CD4-positive, alpha-beta memory T cell (primary cell): ENCODE measurements at regions of chr14 and their contacts with region 1.

Region 1: DNA sequence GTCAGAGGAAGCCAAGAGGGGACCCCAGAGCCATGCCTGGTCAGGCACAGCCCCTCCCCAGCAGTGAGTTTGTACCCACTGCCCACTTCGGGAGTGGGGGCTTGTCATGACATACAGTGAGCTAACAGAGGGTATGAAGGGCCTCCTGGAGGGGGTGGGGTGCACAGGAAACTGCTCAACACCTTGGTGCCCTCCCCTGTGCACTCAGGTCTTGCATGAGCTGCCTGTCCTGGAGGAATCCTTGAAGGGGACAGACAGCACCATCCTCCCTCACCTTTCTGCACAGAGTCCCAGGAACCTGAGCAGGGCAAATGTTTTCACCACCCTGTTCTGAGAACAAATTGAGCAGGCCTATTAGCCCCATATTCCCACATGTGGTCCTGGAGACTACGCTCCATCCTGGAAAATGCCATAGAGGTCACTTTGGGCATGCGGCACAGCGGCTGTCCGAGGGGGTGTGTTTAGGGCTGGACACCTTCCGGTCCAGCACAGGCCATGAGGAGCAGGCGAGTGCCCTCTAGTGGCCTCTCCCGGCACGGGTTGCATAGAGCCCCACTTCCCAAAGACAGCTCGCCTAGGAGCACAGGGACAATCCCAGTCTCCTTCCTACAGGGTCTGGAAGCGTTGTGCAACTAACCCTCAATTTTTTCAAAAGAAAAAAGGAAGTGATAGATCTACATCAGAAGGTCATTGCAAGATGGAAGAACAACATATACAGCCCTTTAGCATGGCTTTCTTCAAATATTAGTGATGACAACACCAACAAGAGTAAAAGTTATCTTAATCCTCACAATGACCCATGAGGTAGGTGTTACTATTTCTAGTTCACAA is 31.9 kb upstream of the ZFP36L1 start:
- DNase-seq: no peak
- H3K4me3 ChIP-seq: no peak overlapping the region
- H3K4me3 Mint-ChIP-seq: no peak overlapping the region
- H3K27ac ChIP-seq: no peak overlapping the region
- H3K27ac Mint-ChIP-seq: peak overlapping the region in 1 of 7 donors; percentile 57
- H3K4me1 ChIP-seq: peaks cover 39% of the 10 kb centered on the region
- H3K4me1 Mint-ChIP-seq: peaks cover 16 to 46% (median 30%) of the 10 kb centered on the region in 4 donors
- H3K27me3 ChIP-seq: no peaks in the 10 kb centered on the region
- H3K27me3 Mint-ChIP-seq: no peaks in the 10 kb centered on the region

Region 2: GRCh38 chr14:67816326-67817002 is 1008.3 kb before region 1 on chr14 and contains the start of gene ZFYVE26:
- CTCF ChIA-PET with region 1: no interaction called
- POLR2A ChIA-PET with region 1: no interaction called
- intact Hi-C with region 1: loop called (anchors 5 kb)
- DNase-seq: peak; percentile 87 to 95 (median 88)
- H3K4me3 ChIP-seq: peak within 1 kb of the TSS; percentile 54 to 86
- H3K4me3 Mint-ChIP-seq: peak within 1 kb of the TSS; percentile 89 to 99 (median 96)
- H3K27ac ChIP-seq: peak within 1 kb of the TSS; percentile 47
- H3K27ac Mint-ChIP-seq: peak within 1 kb of the TSS; percentile 86 to 98 (median 96)
- H3K4me1 ChIP-seq: peaks cover 38% of the 10 kb centered on the region
- H3K4me1 Mint-ChIP-seq: peaks cover 39 to 61% (median 46%) of the 10 kb centered on the region in 4 donors
- H3K27me3 ChIP-seq: no peaks in the 10 kb centered on the region
- H3K27me3 Mint-ChIP-seq: no peaks in the 10 kb centered on the region
- total RNA-seq, gene ZFYVE26: 35.2 to 38.1 TPM

Region 3: GRCh38 chr14:67934008-67934481 is 890.7 kb before region 1 on chr14:
- CTCF ChIA-PET with region 1: interaction called, 67 read pairs
- POLR2A ChIA-PET with region 1: interaction called, 5 read pairs
- intact Hi-C with region 1: no loop called
- DNase-seq: peak in 4 of 5 donors; percentile 37 to 51 (median 46)
- H3K4me3 ChIP-seq: no peak overlapping the region
- H3K4me3 Mint-ChIP-seq: no peak overlapping the region
- H3K27ac ChIP-seq: no peak overlapping the region
- H3K27ac Mint-ChIP-seq: peak overlapping the region in 5 of 7 donors; percentile 9 to 94 (median 77)
- H3K4me1 ChIP-seq: peaks cover 7% of the 10 kb centered on the region
- H3K4me1 Mint-ChIP-seq: peaks cover 5 to 6% (median 5%) of the 10 kb centered on the region in 4 donors
- H3K27me3 ChIP-seq: no peaks in the 10 kb centered on the region
- H3K27me3 Mint-ChIP-seq: no peaks in the 10 kb centered on the region

Region 4: DNA sequence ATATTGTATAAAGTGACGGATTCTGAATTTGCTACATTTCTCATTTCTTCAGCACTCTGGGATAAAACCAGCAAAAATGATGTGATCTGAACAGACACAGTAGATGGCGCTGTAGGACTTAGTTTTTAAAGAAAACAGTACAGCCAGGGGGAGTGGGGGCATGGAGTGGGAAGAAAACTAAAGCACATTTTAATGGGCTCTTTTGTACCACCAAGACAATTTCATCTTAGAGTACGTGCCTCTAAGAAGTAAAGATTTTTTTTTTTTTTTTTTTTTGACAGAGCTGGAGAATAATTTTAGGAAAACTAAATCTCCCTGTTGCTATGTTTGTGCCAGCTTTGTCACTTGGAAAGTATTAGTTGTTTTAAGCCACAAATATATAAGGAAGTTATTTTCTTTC is 880.8 kb before region 1 on chr14:
- CTCF ChIA-PET with region 1: interaction called, 16 read pairs
- POLR2A ChIA-PET with region 1: no interaction called
- intact Hi-C with region 1: no loop called
- DNase-seq: peak; percentile 47 to 65 (median 53)
- H3K4me3 ChIP-seq: no peak overlapping the region
- H3K4me3 Mint-ChIP-seq: no peak overlapping the region
- H3K27ac ChIP-seq: no peak overlapping the region
- H3K27ac Mint-ChIP-seq: no peak overlapping the region
- H3K4me1 ChIP-seq: no peaks in the 10 kb centered on the region
- H3K4me1 Mint-ChIP-seq: no peaks in the 10 kb centered on the region
- H3K27me3 ChIP-seq: no peaks in the 10 kb centered on the region
- H3K27me3 Mint-ChIP-seq: no peaks in the 10 kb centered on the region

Region 5: GRCh38 chr14:68476212-68476907 is 348.4 kb before region 1 on chr14:
- CTCF ChIA-PET with region 1: no interaction called
- POLR2A ChIA-PET with region 1: no interaction called
- intact Hi-C with region 1: no loop called
- DNase-seq: no peak
- H3K4me3 ChIP-seq: no peak overlapping the region
- H3K4me3 Mint-ChIP-seq: no peak overlapping the region
- H3K27ac ChIP-seq: no peak overlapping the region
- H3K27ac Mint-ChIP-seq: no peak overlapping the region
- H3K4me1 ChIP-seq: no peaks in the 10 kb centered on the region
- H3K4me1 Mint-ChIP-seq: peaks cover 7 to 14% (median 9%) of the 10 kb centered on the region in 4 donors
- H3K27me3 ChIP-seq: no peaks in the 10 kb centered on the region
- H3K27me3 Mint-ChIP-seq: no peaks in the 10 kb centered on the region

Region 6: DNA sequence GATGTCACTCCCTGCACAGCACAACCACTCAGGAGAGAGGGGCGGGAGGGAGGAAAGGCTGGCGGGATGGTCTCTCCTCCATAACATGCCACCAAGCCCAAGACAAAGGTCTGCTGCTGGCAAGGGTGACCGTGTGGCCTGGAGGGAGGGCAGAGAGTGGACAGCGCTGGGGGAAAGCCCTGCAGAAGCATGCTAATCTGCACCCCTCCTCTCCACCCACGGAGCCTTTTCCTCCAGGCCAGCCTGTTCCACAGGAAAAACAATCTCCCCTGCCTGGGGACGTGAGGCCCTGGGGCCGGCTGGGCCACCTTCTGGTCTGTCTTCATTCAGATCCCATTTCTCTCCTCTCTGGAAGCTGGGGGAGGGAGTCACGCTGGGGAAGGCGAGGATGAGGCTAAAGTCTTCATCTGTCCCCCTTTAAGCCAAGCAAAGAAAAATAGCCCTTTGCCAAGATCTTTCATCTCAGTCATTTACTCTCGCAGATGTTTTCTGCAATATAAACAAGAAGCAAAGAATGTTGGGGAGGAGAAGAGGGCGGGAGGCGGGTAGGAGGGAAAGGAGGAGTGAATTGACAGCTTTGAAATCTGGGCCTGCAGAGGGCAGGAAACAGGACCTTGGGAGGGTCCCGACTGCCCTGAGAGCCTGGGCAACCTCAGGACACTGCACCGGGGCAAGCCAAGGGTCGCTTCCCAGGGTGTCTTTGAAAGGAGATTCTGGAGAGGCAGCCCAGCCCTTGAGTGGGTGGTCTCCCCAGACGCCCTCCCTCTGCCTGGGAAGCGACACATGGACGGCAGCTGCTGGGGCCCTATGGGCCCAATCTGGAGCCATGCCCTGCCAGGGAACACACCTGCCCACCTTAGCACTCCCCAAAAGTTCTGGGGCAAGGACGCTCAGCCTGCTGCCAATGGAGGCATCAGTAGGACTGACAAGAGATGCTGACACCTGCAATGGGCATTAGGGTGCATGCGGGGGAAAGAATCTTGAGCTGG is 165.5 kb before region 1 on chr14:
- CTCF ChIA-PET with region 1: no interaction called
- POLR2A ChIA-PET with region 1: no interaction called
- intact Hi-C with region 1: no loop called
- DNase-seq: no peak
- H3K4me3 ChIP-seq: no peak overlapping the region
- H3K4me3 Mint-ChIP-seq: no peak overlapping the region
- H3K27ac ChIP-seq: no peak overlapping the region
- H3K27ac Mint-ChIP-seq: peak overlapping the region in 1 of 7 donors; percentile 62
- H3K4me1 ChIP-seq: peaks cover 18% of the 10 kb centered on the region
- H3K4me1 Mint-ChIP-seq: peaks cover 8 to 26% (median 16%) of the 10 kb centered on the region in 4 donors
- H3K27me3 ChIP-seq: no peaks in the 10 kb centered on the region
- H3K27me3 Mint-ChIP-seq: no peaks in the 10 kb centered on the region

Region 7: GRCh38 chr14:68771607-68772006 is 53.1 kb before region 1 on chr14:
- CTCF ChIA-PET with region 1: no interaction called
- POLR2A ChIA-PET with region 1: no interaction called
- intact Hi-C with region 1: no loop called
- DNase-seq: peak in 3 of 5 donors; percentile 26 to 35 (median 33)
- H3K4me3 ChIP-seq: peak overlapping the region; percentile 14 to 37
- H3K4me3 Mint-ChIP-seq: peak overlapping the region in 7 of 8 donors; percentile 68 to 89 (median 77)
- H3K27ac ChIP-seq: peak overlapping the region; percentile 37
- H3K27ac Mint-ChIP-seq: peak overlapping the region; percentile 66 to 90 (median 88)
- H3K4me1 ChIP-seq: peaks cover 70% of the 10 kb centered on the region
- H3K4me1 Mint-ChIP-seq: peaks cover 47 to 86% (median 57%) of the 10 kb centered on the region in 4 donors
- H3K27me3 ChIP-seq: no peaks in the 10 kb centered on the region
- H3K27me3 Mint-ChIP-seq: no peaks in the 10 kb centered on the region